Caco-2 (cell line): ENCODE measurements at regions of chr6 and their contacts with region 1.

Region 1: DNA sequence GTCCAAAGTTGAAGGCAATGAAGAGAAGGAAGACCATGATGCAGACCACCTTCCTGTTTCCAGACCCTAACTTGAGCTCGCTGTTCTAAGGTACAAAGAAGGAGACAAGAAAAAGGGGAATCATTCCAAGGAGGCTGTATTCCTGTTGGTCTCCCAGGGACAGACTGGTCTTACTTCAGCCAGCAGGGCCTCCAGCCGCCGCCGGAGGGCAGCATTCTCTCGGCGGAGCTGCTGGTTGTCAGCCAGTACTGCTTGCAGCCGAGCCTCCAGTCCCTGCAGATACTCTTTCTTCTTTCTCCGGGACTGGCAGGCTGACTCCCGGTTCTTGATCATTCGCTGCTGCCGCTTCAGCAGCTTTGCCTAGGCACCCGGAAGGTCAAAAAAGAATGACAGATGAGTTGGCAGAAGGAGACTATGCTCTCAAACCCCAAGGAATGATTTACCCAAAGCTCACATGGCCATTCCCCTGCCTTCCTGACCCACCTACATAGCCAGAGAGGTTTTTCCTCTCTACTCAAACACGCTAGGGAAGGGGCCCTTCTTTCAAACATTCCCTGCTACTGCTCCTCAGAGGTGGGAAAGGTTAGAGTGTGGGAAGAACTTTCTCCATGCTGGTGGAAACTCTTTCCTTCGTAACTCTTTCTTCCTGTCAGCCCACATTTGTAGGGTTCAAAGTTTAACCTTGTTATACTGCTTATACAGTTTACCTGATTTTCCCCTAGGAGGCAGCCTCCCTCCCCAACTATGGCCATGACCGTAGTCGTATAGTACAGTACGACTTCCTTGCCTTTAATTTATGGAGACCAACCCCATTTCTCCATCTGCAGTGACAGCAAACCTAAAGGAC is 9.0 kb downstream of the ATF6B start:
- DNase-seq: peak; percentile 86 to 91
- H3K4me3 ChIP-seq: no peak overlapping the region
- H3K4me3 Mint-ChIP-seq: peak overlapping the region; percentile 60
- H3K27ac Mint-ChIP-seq: peak overlapping the region; percentile 77
- H3K4me1 ChIP-seq: peaks cover 4% of the 10 kb centered on the region
- H3K4me1 Mint-ChIP-seq: peaks cover 16% of the 10 kb centered on the region
- H3K27me3 ChIP-seq: no peaks in the 10 kb centered on the region
- H3K27me3 Mint-ChIP-seq: no peaks in the 10 kb centered on the region
- CTCF ChIP-seq: peak; percentile 89 to 95

Region 2: DNA sequence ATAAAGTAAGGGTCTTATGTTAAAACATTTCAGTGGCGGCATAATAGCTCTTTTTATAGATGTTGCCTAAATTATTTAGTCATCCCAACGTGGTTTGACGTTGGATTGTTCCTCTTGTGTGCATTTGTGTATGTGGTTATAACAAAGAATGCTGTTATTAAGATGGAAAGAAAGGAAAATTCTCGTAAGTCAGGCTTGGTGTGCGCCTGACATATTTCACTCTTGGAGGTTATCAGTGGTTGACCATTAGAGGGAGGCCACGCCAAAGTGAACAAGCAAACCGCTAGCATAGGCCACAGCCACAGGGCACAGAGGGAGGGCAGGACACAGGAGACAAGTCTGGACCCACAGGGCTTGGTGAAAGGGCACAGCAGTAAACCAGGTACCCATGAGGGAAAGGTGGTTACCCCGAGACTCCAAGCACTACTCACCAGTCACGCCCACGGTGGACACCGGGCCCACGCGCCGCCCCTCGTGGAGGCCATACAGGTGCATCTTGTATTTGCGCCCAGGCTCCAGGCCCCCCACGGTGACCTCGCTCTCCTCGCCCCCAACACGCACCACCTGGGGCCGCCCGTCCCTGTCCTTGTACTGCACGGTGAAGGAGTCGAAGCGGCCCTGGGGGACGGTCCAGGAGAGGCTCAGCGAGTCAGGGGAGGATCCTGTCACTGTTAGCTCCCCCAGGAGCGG is 57.9 kb before region 1 on chr6:
- CTCF ChIA-PET with region 1: interaction called, 3 read pairs
- POLR2A ChIA-PET with region 1: no interaction called
- intact Hi-C with region 1: loop called (anchors 1 kb)
- DNase-seq: peak in 1 of 2 experiments; percentile 38
- H3K4me3 ChIP-seq: no peak overlapping the region
- H3K4me3 Mint-ChIP-seq: peak overlapping the region; percentile 51
- H3K27ac Mint-ChIP-seq: no peak overlapping the region
- H3K4me1 ChIP-seq: no peaks in the 10 kb centered on the region
- H3K4me1 Mint-ChIP-seq: no peaks in the 10 kb centered on the region
- H3K27me3 ChIP-seq: no peaks in the 10 kb centered on the region
- H3K27me3 Mint-ChIP-seq: peaks cover 10% of the 10 kb centered on the region
- CTCF ChIP-seq: peak in 1 of 2 experiments; percentile 44

Region 3: DNA sequence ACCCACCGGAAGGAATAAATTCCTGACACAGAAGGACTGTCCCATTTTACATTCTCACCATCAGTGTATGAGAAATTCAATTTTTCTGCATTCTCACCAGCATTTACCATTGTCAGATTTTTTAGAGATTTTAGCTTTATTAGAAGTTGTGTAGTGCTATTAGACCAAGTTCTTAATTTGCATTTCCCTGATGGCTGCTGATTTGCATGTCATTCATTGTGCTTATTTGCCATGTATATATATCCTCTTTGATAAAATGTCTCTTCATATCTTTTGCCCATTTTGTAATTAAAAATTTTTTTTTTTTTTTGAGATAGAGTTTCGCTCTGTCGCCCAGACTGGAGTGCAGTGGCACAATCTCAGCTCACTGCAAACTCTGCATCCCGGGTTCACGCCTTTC is 420.8 kb after region 1 on chr6:
- CTCF ChIA-PET with region 1: no interaction called
- POLR2A ChIA-PET with region 1: no interaction called
- intact Hi-C with region 1: no loop called
- DNase-seq: no peak
- H3K4me3 ChIP-seq: no peak overlapping the region
- H3K4me3 Mint-ChIP-seq: no peak overlapping the region
- H3K27ac Mint-ChIP-seq: no peak overlapping the region
- H3K4me1 ChIP-seq: no peaks in the 10 kb centered on the region
- H3K4me1 Mint-ChIP-seq: no peaks in the 10 kb centered on the region
- H3K27me3 ChIP-seq: no peaks in the 10 kb centered on the region
- H3K27me3 Mint-ChIP-seq: peaks cover 19% of the 10 kb centered on the region
- CTCF ChIP-seq: no peak